ENCODE measurements at regions of chr14 and their contacts with region 1.

Region 1: GRCh38 chr14:69766984-69767368 is at the start of gene SRSF5:
- DNase-seq: peak in 9 of 10 donors; percentile 88 to 97 (median 94)
- ATAC-seq: peak; percentile 74 to 82
- H3K4me3 Mint-ChIP-seq: peak within 1 kb of the TSS; percentile 93 to 100 (median 99)
- H3K27ac Mint-ChIP-seq: peak within 1 kb of the TSS; percentile 100
- H3K4me1 Mint-ChIP-seq: peaks cover 39 to 78% (median 70%) of the 10 kb centered on the region in 4 donors
- H3K27me3 Mint-ChIP-seq: peaks cover 0 to 6% (median 0%) of the 10 kb centered on the region in 5 donors
- polyA plus RNA-seq, gene SRSF5: 1,279 to 1,496 (median 1,446) TPM

Region 2: GRCh38 chr14:69398053-69398817 is 368.7 kb before region 1 on chr14 and contains the starts of genes ERH and SLC39A9:
- POLR2A ChIA-PET with region 1: interaction called, 15 read pairs
- DNase-seq: peak; percentile 87 to 98 (median 94)
- ATAC-seq: peak; percentile 85 to 86
- H3K4me3 Mint-ChIP-seq: peak within 1 kb of the TSS; percentile 89 to 98 (median 97)
- H3K27ac Mint-ChIP-seq: peak within 1 kb of the TSS; percentile 97 to 100 (median 99)
- H3K4me1 Mint-ChIP-seq: peaks cover 10 to 84% (median 66%) of the 10 kb centered on the region in 4 donors
- H3K27me3 Mint-ChIP-seq: no peaks in the 10 kb centered on the region
- polyA plus RNA-seq, gene ERH: 54.5 to 63.5 (median 58.9) TPM
- polyA plus RNA-seq, gene SLC39A9: 12.5 to 17.1 (median 13.0) TPM

Region 3: GRCh38 chr14:69726761-69727511 is 40.0 kb before region 1 on chr14:
- POLR2A ChIA-PET with region 1: interaction called, 12 read pairs
- DNase-seq: peak; percentile 65 to 90 (median 82)
- ATAC-seq: peak; percentile 92 to 95
- H3K4me3 Mint-ChIP-seq: peak overlapping the region; percentile 49 to 82 (median 72)
- H3K27ac Mint-ChIP-seq: peak overlapping the region in 9 of 10 donors; percentile 15 to 86 (median 65)
- H3K4me1 Mint-ChIP-seq: peaks cover 3 to 29% (median 10%) of the 10 kb centered on the region in 4 donors
- H3K27me3 Mint-ChIP-seq: peaks cover 0 to 1% (median 0%) of the 10 kb centered on the region in 5 donors

Region 4: GRCh38 chr14:69755784-69756183 is 11.2 kb before region 1 on chr14:
- POLR2A ChIA-PET with region 1: interaction called, 50 read pairs
- DNase-seq: peak in 1 of 10 donors; percentile 16
- ATAC-seq: peak; percentile 53 to 67
- H3K4me3 Mint-ChIP-seq: peak overlapping the region in 4 of 10 donors; percentile 7 to 58 (median 30)
- H3K27ac Mint-ChIP-seq: peak overlapping the region in 8 of 10 donors; percentile 15 to 86 (median 69)
- H3K4me1 Mint-ChIP-seq: peaks cover 8 to 20% (median 12%) of the 10 kb centered on the region in 4 donors
- H3K27me3 Mint-ChIP-seq: peaks cover 0 to 3% (median 0%) of the 10 kb centered on the region in 5 donors

Measured in naive thymus-derived CD8-positive, alpha-beta T cell (primary cell).